PC-3 (cell line): ENCODE measurements at regions of chr2 and their contacts with region 1.

Region 1: GRCh38 chr2:37324786-37325624 is at the start of gene PRKD3:
- DNase-seq: peak; percentile 69
- ATAC-seq: peak; percentile 70
- H3K4me3 ChIP-seq: peak within 1 kb of the TSS; percentile 93
- H3K27ac ChIP-seq: peak within 1 kb of the TSS; percentile 44
- H3K4me1 ChIP-seq: peaks cover 26% of the 10 kb centered on the region
- H3K27me3 ChIP-seq: no peaks in the 10 kb centered on the region
- CTCF ChIP-seq: no peak
- total RNA-seq, gene PRKD3: 26.4 and 27.2 TPM in 2 replicates

Region 2: DNA sequence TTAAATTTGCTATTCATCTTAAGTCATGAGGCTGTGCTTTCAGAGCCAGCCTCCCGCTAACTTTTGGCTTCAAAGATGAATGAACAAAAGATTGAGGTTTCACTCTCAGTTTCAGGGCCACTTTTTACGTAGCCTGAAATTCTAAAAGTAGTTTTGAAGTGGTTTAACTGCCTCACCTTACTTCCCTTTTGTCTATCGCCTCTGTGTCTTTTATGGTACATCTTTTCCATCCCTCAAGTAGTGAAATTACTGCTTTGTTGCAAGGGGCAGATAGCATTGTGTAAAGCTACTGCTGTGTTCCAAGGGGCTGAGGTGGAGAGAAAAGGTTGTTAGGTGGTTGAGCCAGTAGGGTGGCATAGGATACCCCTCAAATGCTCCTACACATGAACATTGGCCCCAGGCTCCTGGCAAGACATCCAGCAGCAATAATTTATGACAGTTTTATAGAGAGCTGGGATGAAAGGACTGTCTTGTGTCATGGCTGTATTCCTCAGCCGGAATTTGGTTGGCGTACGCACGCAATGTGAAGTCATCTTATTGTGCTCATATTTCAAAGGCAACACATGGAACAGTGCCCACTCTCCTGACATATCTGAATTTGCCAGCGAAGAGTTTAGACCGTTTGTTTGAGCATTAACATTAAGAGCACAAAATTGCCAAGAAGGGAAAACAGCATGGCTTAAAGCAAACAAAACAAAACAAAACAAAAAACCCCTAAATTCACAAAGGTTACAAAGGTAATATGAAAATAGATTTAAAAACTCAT is 51.6 kb after region 1 on chr2:
- CTCF ChIA-PET with region 1: interaction called, 4 read pairs
- POLR2A ChIA-PET with region 1: no interaction called
- intact Hi-C with region 1: loop called (anchors 2 kb)
- DNase-seq: peak; percentile 95
- ATAC-seq: peak; percentile 80
- H3K4me3 ChIP-seq: peak overlapping the region; percentile 48
- H3K27ac ChIP-seq: peak overlapping the region; percentile 76
- H3K4me1 ChIP-seq: peaks cover 45% of the 10 kb centered on the region
- H3K27me3 ChIP-seq: no peaks in the 10 kb centered on the region
- CTCF ChIP-seq: no peak

Region 3: GRCh38 chr2:37585982-37586621 is 261.1 kb after region 1 on chr2:
- CTCF ChIA-PET with region 1: no interaction called
- POLR2A ChIA-PET with region 1: no interaction called
- intact Hi-C with region 1: loop called (anchors 5 kb)
- DNase-seq: peak; percentile 95
- ATAC-seq: peak; percentile 64
- H3K4me3 ChIP-seq: peak overlapping the region; percentile 41; the same call in 1 of the 2 replicates
- H3K27ac ChIP-seq: peak overlapping the region; percentile 90
- H3K4me1 ChIP-seq: peaks cover 84% of the 10 kb centered on the region
- H3K27me3 ChIP-seq: no peaks in the 10 kb centered on the region
- CTCF ChIP-seq: no peak